Lower leg skin (tissue), 4 donors: ENCODE measurements at regions of chr6 and their contacts with region 1.

Region 1: GRCh38 chr6:34044945-34045595 is 100.8 kb downstream of the GRM4 start:
- DNase-seq: no peak
- H3K4me3 ChIP-seq: no peak overlapping the region
- CTCF ChIP-seq: no peak
- POLR2A ChIP-seq: no peak

Region 2: GRCh38 chr6:33497157-33497556 is 547.9 kb before region 1 on chr6:
- intact Hi-C with region 1: no loop called
- DNase-seq: no peak
- H3K4me3 ChIP-seq: no peak overlapping the region
- CTCF ChIP-seq: no peak
- POLR2A ChIP-seq: no peak

Region 3: DNA sequence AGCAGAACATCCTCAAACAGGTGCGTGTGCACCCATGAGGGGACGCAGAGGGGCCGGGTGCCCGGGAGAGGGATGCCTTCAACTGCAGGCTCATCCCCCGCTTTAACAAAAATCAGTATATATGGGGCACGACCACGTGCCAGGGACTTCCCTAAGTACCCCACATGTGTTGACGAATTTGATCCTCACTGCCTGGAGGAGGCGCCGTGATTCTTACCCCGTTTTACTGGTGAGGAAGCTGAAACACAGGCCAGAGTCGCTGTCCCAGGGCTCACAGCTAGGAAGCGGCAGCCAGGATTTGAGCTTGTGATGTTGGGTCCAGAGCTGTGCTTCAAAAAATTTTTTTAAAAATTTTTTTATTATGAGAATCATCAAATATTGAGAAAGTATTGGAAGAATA is 379.1 kb before region 1 on chr6:
- intact Hi-C with region 1: no loop called
- DNase-seq: no peak
- H3K4me3 ChIP-seq: no peak overlapping the region
- CTCF ChIP-seq: no peak
- POLR2A ChIP-seq: no peak

Region 4: GRCh38 chr6:35876902-35877301 is 1831.8 kb after region 1 on chr6:
- intact Hi-C with region 1: loop called (anchors 5 kb)
- DNase-seq: no peak
- H3K4me3 ChIP-seq: no peak overlapping the region
- CTCF ChIP-seq: no peak
- POLR2A ChIP-seq: no peak